Motor neuron (in vitro differentiated cells): ENCODE measurements at regions of chr3 and their contacts with region 1.

Region 1: GRCh38 chr3:76107935-76108570 is 322.7 kb upstream of the ZNF717 start:
- ATAC-seq: peak in 3 of 8 experiments; percentile 55 to 66 (median 60)
- H3K4me3 ChIP-seq: no peak overlapping the region
- H3K27ac ChIP-seq: no peak overlapping the region
- H3K4me1 ChIP-seq: no peaks in the 10 kb centered on the region

Region 2: GRCh38 chr3:74709951-74710350 is 1398.1 kb before region 1 on chr3:
- in situ Hi-C with region 1: no loop called
- ATAC-seq: no peak
- H3K4me3 ChIP-seq: no peak overlapping the region
- H3K27ac ChIP-seq: no peak overlapping the region
- H3K4me1 ChIP-seq: no peaks in the 10 kb centered on the region

Region 3: GRCh38 chr3:75814797-75815196 is 293.3 kb before region 1 on chr3:
- in situ Hi-C with region 1: loop called in 1 of 9 experiments (anchors 25 kb)
- ATAC-seq: no peak
- H3K4me3 ChIP-seq: no peak overlapping the region
- H3K27ac ChIP-seq: no peak overlapping the region
- H3K4me1 ChIP-seq: no peaks in the 10 kb centered on the region